Activated CD8-positive, alpha-beta T cell treated with anti-CD3 and anti-CD28 coated beads, Interleukin-2, amount 10 ng/mL, durations not matched to agents 7 days and 5 days (primary cell): ENCODE measurements at regions of chr21 and their contacts with region 1.

Region 1: GRCh38 chr21:15483138-15483780 is 246.5 kb upstream of the USP25 start:
- DNase-seq: peak; percentile 86
- ATAC-seq: peak; percentile 99
- H3K4me3 Mint-ChIP-seq: no peak overlapping the region
- H3K27ac Mint-ChIP-seq: no peak overlapping the region
- H3K4me1 Mint-ChIP-seq: peaks cover 9% of the 10 kb centered on the region
- H3K27me3 Mint-ChIP-seq: peaks cover 4% of the 10 kb centered on the region

Region 2: GRCh38 chr21:14864211-14865021 is 618.8 kb before region 1 on chr21:
- CTCF ChIA-PET with region 1: interaction called, 13 read pairs
- POLR2A ChIA-PET with region 1: no interaction called
- DNase-seq: peak; percentile 60
- ATAC-seq: peak; percentile 63
- H3K4me3 Mint-ChIP-seq: no peak overlapping the region
- H3K27ac Mint-ChIP-seq: no peak overlapping the region
- H3K4me1 Mint-ChIP-seq: peaks cover 3% of the 10 kb centered on the region
- H3K27me3 Mint-ChIP-seq: no peaks in the 10 kb centered on the region

Region 3: DNA sequence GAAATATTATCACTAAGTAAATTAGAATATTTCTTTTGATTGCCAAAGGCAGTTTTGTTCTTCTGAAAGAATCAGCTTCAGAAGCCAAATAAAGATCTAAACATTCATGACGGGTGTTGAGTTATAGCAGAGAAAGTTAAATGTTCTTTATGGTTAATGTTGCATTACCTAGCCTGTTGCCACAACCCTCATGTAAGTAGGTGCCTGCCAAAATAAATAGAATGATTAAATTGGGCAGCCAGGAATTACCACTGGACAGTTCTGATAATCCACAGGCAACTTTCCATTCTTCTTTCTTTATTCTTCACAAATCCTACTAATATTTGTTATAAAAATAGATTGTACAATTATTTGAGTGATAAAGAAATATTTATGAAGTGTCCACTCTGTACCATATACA is 200.6 kb before region 1 on chr21:
- CTCF ChIA-PET with region 1: no interaction called
- POLR2A ChIA-PET with region 1: no interaction called
- DNase-seq: no peak
- ATAC-seq: no peak
- H3K4me3 Mint-ChIP-seq: no peak overlapping the region
- H3K27ac Mint-ChIP-seq: no peak overlapping the region
- H3K4me1 Mint-ChIP-seq: no peaks in the 10 kb centered on the region
- H3K27me3 Mint-ChIP-seq: no peaks in the 10 kb centered on the region

Region 4: DNA sequence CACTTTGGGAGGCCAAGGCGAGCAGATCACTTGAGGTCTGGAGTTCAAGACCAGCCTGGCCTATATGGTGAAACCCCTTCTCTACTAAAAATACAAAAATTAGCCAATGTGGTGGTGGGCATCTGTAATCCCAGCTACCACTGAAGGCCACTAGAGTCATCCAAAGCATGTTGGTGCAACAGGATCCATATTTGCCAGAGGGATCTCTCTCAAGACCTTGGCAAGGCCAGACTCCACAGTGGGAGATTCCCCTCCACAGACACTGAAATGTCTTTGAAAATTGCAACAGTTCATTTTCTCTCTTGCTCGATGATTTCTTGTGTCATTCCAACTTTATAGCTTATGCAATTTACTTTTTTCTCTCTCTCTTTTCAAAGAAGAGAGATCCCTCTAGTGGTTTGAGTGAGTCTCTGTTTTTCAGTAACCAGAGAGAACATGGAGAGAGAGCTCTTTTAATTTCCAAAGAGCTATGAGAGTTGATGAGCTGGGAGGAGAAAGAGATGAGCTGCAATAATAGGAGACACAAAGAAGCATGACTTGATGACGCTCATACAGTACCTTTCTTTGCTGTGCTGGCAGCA is 69.7 kb after region 1 on chr21:
- CTCF ChIA-PET with region 1: interaction called, 14 read pairs
- POLR2A ChIA-PET with region 1: no interaction called
- DNase-seq: no peak
- ATAC-seq: no peak
- H3K4me3 Mint-ChIP-seq: no peak overlapping the region
- H3K27ac Mint-ChIP-seq: no peak overlapping the region
- H3K4me1 Mint-ChIP-seq: peaks cover 3% of the 10 kb centered on the region
- H3K27me3 Mint-ChIP-seq: no peaks in the 10 kb centered on the region